ENCODE measurements at regions of chr17 and their contacts with region 1.

Region 1: GRCh38 chr17:38824899-38825761 is at the start of gene CWC25:
- DNase-seq: peak; percentile 85 to 99 (median 93)

Region 2: GRCh38 chr17:38777641-38778250 is 47.4 kb before region 1 on chr17:
- intact Hi-C with region 1: loop called (anchors 10 kb)
- DNase-seq: peak in 2 of 10 donors; percentile 8 to 24

Region 3: DNA sequence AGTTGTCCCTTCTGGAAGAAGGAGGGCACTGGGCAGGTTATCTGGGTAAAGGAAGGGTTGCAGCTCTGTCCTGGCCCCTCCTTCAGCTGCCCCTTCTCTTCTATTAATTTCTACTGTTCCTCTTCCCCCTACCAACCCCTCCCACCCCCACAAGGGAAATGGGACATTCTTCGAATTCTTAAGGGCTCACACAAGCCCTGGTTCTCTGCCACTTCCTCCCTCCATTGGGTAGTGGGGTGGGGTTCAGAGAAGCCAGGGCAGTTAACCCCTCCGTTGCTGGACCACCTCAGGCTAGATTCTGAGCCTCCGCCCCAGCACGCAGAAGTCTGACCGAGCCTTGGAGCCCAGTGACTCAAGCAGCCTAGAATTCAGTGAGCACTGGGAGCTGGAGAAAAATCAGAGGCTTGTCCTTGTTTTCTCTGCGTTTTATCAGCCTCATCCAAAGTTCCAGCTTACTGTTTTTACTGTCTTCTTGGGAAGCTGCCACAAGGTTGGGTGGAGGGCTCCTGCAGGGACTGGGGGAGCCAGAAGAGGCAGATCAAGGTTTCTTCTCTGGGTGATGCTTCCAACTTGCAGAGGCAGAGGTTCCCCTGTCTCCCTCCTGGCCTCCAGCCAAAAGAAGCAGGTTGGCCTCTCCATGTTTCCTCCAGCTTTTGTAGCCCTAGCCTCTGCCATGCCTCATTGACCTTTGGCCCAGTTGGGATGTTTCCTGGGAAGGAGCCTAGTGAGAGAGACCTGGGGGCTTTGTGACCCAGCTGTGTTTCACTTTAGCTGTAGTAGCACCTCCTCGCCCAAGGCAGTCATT is 55.0 kb after region 1 on chr17:
- intact Hi-C with region 1: no loop called
- DNase-seq: peak in 1 of 10 donors; percentile 78

Region 4: DNA sequence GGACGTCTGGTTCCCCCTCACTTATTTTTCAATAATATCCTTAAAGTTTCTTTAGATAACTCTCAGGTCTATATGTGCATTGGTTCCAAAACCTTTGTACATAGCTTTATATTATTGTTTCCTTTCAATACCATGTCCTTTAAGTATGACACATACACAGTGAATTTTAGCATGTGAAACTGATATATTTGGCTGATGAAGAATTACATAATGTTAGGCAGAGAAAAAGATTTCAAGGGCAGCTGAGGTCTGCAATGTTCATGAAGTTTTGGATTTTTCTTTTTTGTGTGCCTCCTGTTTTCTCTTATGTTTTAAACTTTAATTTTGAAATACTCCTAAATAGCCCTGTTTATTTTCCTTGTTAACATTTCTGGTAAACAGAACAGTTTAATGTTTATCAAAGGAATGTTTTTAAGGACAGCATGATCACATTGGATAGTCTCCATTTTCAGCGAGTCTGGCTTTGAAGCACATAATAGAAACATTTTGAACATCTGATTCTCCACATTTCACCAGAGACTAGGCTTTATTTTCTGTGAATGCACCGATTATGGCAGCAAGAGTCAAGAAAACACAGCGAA is 175.0 kb after region 1 on chr17:
- intact Hi-C with region 1: no loop called
- DNase-seq: no peak